ENCODE measurements at regions of chr19 and their contacts with region 1.

Region 1: DNA sequence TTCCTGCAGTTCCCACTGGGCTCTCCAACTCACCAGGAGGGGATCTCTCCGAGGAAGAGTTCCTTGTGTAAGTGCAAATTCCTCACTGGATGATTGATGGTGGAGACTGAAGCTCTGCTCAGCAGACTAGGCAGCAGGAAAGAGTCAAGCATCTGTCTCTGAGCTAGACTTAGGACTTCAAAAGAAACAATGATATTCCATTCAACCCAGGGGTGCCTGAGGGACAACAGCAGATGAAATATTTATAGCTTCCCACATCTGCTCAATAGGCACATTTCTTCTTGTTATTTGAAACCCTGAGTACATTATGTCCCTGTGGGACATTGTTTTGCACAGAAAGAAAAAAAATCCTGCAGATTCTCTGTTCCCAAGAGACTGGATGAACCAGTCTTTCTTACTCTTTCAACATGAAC is at the starts of genes OR7A5 and OR7C1:
- DNase-seq: peak in 1 of 2 donors; percentile 78
- H3K4me3 ChIP-seq: peak within 1 kb of the TSS in 2 of 3 donors; percentile 35 to 43
- H3K27ac ChIP-seq: peak within 1 kb of the TSS; percentile 90 to 94
- H3K4me1 ChIP-seq: no peaks in the 10 kb centered on the region
- H3K27me3 ChIP-seq: no peaks in the 10 kb centered on the region
- CTCF ChIP-seq: peak in 1 of 3 donors; percentile 17
- POLR2A ChIP-seq: no peak
- total RNA-seq, gene OR7A5: 0.33 to 1.3 TPM in 2 of 3 donors, not detected in the other
- total RNA-seq, gene OR7C1: 0.98 to 1.5 TPM in 2 of 3 donors, not detected in the other

Region 2: DNA sequence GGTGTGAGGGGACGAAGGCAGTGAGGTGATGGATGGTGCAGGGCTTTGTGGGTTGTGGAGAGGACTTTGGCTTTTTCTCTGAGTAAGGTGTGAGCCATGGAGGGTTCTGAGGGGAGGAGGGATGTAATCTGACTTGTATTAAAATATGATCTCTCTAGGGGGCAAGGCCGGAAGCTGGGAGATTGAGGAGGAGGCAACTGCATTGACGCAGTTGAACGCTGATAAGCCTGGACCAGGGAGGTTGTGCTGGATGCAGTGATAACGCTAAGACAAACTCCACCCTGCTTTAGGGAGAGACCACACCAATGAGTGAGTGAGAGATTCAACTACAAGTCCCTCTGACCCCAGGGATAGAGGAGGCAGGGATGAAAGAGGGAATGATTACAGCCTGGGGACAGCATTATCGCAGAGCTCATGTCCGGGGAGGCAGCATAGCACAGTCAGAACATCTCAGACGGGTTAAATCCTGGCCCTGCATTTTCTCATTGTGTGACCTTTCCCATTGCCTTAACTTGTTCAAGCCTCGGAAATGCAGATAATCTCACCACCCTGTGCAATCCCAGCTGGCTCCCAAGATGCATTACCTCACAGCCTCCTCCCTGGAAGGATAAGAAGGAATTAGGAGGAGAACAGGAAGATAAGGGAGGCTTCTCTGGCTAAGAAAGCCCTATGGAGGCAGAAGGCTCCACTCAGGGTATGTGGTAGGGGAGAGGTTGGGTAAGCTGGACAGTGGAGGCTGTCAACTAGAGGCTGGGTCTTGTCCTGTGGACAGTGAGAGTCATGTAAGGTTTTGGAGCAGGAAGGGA is 1453.0 kb before region 1 on chr19:
- intact Hi-C with region 1: loop called (anchors 5 kb)
- DNase-seq: no peak
- H3K4me3 ChIP-seq: no peak overlapping the region
- H3K27ac ChIP-seq: no peak overlapping the region
- H3K4me1 ChIP-seq: no peaks in the 10 kb centered on the region
- H3K27me3 ChIP-seq: peaks cover 0 to 3% of the 10 kb centered on the region in 2 donors
- CTCF ChIP-seq: no peak
- POLR2A ChIP-seq: no peak

Region 3: GRCh38 chr19:15358918-15359317 is 523.9 kb after region 1 on chr19:
- intact Hi-C with region 1: no loop called
- DNase-seq: no peak
- H3K4me3 ChIP-seq: no peak overlapping the region
- H3K27ac ChIP-seq: no peak overlapping the region
- H3K4me1 ChIP-seq: no peaks in the 10 kb centered on the region
- H3K27me3 ChIP-seq: no peaks in the 10 kb centered on the region
- CTCF ChIP-seq: no peak
- POLR2A ChIP-seq: no peak